Activated naive CD4-positive, alpha-beta T cell treated with anti-CD3 and anti-CD28 coated beads for 36 hours (primary cell): ENCODE measurements at regions of chr14 and their contacts with region 1.

Region 1: DNA sequence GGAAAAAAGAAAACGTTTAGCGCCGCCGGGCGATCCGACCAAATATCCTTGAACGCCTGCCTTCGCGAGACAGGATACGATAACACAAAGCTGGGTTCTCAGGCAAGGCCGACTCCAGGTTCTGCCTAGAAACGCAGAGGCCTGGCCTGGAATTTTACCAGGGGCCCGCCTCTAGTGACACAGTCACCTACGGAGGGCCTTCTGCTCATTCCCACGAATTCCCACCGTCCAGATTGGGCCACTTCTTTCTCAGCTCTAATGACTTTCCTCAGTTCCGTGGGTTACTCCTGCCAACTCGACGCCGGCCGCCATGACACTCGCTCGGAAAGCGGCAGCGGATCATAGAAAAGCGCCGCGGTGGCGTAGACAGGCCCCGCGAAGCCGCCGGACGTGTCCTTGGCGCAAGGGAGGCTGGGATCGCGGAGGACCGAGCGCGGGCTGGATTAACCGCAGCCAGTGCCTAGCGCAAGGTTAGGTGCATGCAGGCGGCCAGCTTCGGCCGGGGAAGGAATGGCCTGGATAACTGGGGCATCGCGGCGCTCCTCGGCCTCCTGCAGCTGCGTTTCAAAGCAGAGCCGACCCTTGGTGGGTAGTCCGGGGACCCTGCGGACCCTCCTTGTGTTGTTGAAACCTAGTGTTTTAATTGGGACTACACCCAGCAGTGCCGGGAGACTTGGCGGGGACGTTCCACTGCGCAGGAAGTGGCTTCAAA is at the start of gene TRIP11:
- DNase-seq: peak; percentile 97
- H3K4me3 Mint-ChIP-seq: peak within 1 kb of the TSS; percentile 98
- H3K27ac Mint-ChIP-seq: peak within 1 kb of the TSS; percentile 98
- H3K4me1 Mint-ChIP-seq: peaks cover 32% of the 10 kb centered on the region
- H3K27me3 Mint-ChIP-seq: no peaks in the 10 kb centered on the region
- total RNA-seq, gene TRIP11: 22.7 to 26.1 TPM

Region 2: GRCh38 chr14:92121670-92122350 is 81.9 kb after region 1 on chr14 and contains the starts of genes CPSF2 and NDUFB1:
- CTCF ChIA-PET with region 1: interaction called, 5 read pairs
- intact Hi-C with region 1: loop called (anchors 1 kb)
- DNase-seq: peak; percentile 90
- H3K4me3 Mint-ChIP-seq: peak within 1 kb of the TSS; percentile 99
- H3K27ac Mint-ChIP-seq: peak within 1 kb of the TSS; percentile 100
- H3K4me1 Mint-ChIP-seq: peaks cover 41% of the 10 kb centered on the region
- H3K27me3 Mint-ChIP-seq: no peaks in the 10 kb centered on the region
- total RNA-seq, gene CPSF2: 103 to 115 TPM
- total RNA-seq, gene NDUFB1: 111 to 114 TPM